Activated T-helper 1 cell treated with anti-CD3 and anti-CD28 coated beads, Interleukin-12 subunit alpha, Interleukin-12 subunit beta, Interleukin-2, Interleukin-4 antibody, amounts not matched to agents 30 ng/mL and 10 ng/mL and 1 ng/mL, durations not matched to agents 14 hours and 24 hours and 36 hours (primary cell): ENCODE measurements at regions of chr1 and their contacts with region 1.

Region 1: GRCh38 chr1:160006312-160006940 is 25.4 kb downstream of the PIGM start:
- DNase-seq: peak; percentile 55
- H3K4me3 Mint-ChIP-seq: no peak overlapping the region
- H3K27ac Mint-ChIP-seq: no peak overlapping the region
- H3K4me1 Mint-ChIP-seq: no peaks in the 10 kb centered on the region
- H3K27me3 Mint-ChIP-seq: peaks cover 18% of the 10 kb centered on the region

Region 2: GRCh38 chr1:159891275-159892157 is 114.9 kb before region 1 on chr1:
- intact Hi-C with region 1: loop called (anchors 1 kb)
- DNase-seq: peak; percentile 64
- H3K4me3 Mint-ChIP-seq: no peak overlapping the region
- H3K27ac Mint-ChIP-seq: no peak overlapping the region
- H3K4me1 Mint-ChIP-seq: peaks cover 12% of the 10 kb centered on the region
- H3K27me3 Mint-ChIP-seq: peaks cover 17% of the 10 kb centered on the region

Region 3: GRCh38 chr1:159953536-159954515 is 52.6 kb before region 1 on chr1 and contains the start of gene SLAMF9:
- intact Hi-C with region 1: no loop called
- DNase-seq: no peak
- H3K4me3 Mint-ChIP-seq: no peak within 1 kb of the TSS
- H3K27ac Mint-ChIP-seq: no peak within 1 kb of the TSS
- H3K4me1 Mint-ChIP-seq: peaks cover 3% of the 10 kb centered on the region
- H3K27me3 Mint-ChIP-seq: peaks cover 38% of the 10 kb centered on the region
- total RNA-seq, gene SLAMF9: not detected in 2 replicates

Region 4: DNA sequence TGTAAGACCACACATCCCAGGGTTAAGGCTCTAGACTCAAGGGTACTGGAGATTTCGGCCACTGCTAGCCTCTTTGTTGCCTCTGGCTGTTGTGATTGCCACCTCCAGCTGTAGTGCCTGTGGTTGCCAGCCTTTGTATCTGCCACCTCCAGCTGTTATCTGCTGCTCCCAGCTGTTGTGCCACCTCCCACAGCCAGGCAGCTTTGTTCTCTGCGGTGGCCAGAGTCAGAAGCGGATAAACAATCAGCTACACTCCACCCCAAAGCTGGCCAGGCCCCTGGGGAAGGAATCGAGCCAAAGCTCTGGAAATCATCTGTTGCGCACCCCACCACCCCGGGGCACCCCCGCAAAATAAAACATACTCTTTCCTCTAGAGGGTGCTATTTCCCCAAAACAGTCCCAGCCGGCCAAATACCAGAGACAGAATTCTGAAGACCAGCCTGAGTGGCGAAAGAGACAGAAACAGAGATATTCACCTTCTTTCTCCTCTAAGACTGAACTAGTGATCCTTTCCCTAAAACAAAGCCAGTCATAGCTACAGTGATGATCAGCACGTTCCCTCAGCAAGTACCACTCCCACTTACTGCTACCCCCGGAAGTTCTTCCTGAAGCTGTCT is 40.2 kb after region 1 on chr1:
- intact Hi-C with region 1: no loop called
- DNase-seq: peak; percentile 22
- H3K4me3 Mint-ChIP-seq: peak overlapping the region; percentile 55
- H3K27ac Mint-ChIP-seq: no peak overlapping the region
- H3K4me1 Mint-ChIP-seq: peaks cover 16% of the 10 kb centered on the region
- H3K27me3 Mint-ChIP-seq: peaks cover 16% of the 10 kb centered on the region